AG04449 (cell line): ENCODE measurements at regions of chr22 and their contacts with region 1.

Region 1: DNA sequence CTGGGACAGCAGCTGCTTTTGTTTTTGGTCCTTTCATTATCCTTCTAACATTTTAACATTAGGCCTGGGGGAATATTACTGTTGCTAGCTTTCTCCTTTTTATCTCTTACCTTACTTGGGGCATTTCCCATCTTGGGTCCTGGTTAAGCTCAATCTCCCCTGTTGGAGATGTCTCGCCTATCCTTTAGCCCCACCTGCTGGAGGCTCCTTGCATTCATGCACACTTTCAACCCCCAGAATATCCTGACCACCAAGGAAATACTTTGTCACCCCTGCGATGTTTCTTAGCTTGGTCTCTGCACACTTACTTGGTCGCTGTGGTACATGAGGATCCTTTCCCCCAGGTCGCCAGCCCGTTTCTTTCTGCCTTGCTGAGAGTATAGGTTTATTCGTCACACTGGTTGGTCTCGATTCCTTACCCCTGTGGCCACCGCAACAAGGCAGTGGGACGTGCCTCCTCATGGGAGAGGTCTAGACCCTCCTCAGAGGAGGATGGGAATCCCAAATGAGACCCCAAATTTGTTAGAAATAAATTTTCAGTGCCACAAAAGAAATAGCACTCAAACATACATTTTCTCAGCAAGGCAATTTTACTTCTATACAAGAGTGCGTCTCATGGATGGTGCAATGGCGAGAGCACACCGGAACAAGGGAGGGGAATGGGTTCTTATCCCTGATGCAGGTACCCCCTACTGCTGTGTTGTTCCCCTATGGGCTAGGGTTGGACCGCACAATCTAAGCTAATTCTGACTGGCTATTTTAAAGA is 5.4 kb upstream of the TXN2 start:
- DNase-seq: no peak
- H3K4me3 ChIP-seq: no peak overlapping the region
- CTCF ChIP-seq: peak; percentile 59

Region 2: GRCh38 chr22:36151006-36151595 is 335.7 kb before region 1 on chr22:
- CTCF ChIA-PET with region 1: interaction called, 11 read pairs
- POLR2A ChIA-PET with region 1: no interaction called
- DNase-seq: no peak
- H3K4me3 ChIP-seq: no peak overlapping the region
- CTCF ChIP-seq: no peak

Region 3: DNA sequence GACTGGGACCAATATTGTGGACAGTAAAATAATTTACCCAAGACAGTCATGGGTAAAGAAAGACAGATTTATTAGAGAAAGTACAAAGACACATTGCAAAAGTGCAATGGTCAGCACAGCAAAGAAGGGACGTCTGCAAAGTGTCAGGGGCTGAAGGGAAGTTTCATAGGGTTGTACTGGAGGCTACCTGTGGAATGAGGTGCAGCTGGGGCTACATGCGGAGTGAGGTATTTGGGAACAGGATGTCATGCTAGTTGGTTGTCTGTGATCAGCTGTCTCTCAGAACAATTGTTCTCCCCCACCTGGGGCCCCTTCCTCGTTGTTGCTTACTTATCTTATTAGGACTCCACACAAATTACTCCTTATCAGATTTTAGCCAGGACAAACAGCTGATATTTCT is 314.9 kb before region 1 on chr22:
- CTCF ChIA-PET with region 1: interaction called, 10 read pairs
- POLR2A ChIA-PET with region 1: no interaction called
- DNase-seq: no peak
- H3K4me3 ChIP-seq: no peak overlapping the region
- CTCF ChIP-seq: no peak

Region 4: GRCh38 chr22:36286471-36287224 is 200.2 kb before region 1 on chr22:
- CTCF ChIA-PET with region 1: interaction called, 14 read pairs
- POLR2A ChIA-PET with region 1: no interaction called
- DNase-seq: no peak
- H3K4me3 ChIP-seq: no peak overlapping the region
- CTCF ChIP-seq: peak; percentile 88

Region 5: GRCh38 chr22:36497910-36498665 is 11.3 kb after region 1 on chr22:
- CTCF ChIA-PET with region 1: interaction called, 22 read pairs
- POLR2A ChIA-PET with region 1: no interaction called
- DNase-seq: no peak
- H3K4me3 ChIP-seq: no peak overlapping the region
- CTCF ChIP-seq: no peak